Dorsolateral prefrontal cortex (tissue), 120 donors: ENCODE measurements at regions of chr16 and their contacts with region 1.

Region 1: GRCh38 chr16:75110637-75111513 is 5.7 kb downstream of the LDHD start:
- DNase-seq: peak; percentile 85 to 93 (median 90)
- H3K4me3 ChIP-seq: peak overlapping the region in 58 of 59 donors; percentile 7 to 69 (median 48)
- H3K27ac ChIP-seq: peak overlapping the region; percentile 60 to 95 (median 86)
- H3K27me3 ChIP-seq: no peaks in the 10 kb centered on the region
- CTCF ChIP-seq: peak; percentile 55 to 97 (median 91)

Region 2: GRCh38 chr16:74709441-74709877 is 401.4 kb before region 1 on chr16:
- intact Hi-C with region 1: loop called (anchors 5 to 10 kb)
- DNase-seq: peak; percentile 79 to 90 (median 86)
- H3K4me3 ChIP-seq: no peak overlapping the region
- H3K27ac ChIP-seq: peak overlapping the region; percentile 10 to 100 (median 87)
- H3K27me3 ChIP-seq: no peaks in the 10 kb centered on the region
- CTCF ChIP-seq: peak in 55 of 56 donors; percentile 95 to 100 (median 99)

Region 3: GRCh38 chr16:74862741-74863244 is 248.1 kb before region 1 on chr16:
- intact Hi-C with region 1: loop called in 1 of 2 experiments (anchors 10 kb)
- DNase-seq: peak in 1 of 10 donors; percentile 23
- H3K4me3 ChIP-seq: no peak overlapping the region
- H3K27ac ChIP-seq: peak overlapping the region in 24 of 59 donors; percentile 2 to 68 (median 36)
- H3K27me3 ChIP-seq: no peaks in the 10 kb centered on the region
- CTCF ChIP-seq: peak; percentile 47 to 97 (median 88)

Region 4: DNA sequence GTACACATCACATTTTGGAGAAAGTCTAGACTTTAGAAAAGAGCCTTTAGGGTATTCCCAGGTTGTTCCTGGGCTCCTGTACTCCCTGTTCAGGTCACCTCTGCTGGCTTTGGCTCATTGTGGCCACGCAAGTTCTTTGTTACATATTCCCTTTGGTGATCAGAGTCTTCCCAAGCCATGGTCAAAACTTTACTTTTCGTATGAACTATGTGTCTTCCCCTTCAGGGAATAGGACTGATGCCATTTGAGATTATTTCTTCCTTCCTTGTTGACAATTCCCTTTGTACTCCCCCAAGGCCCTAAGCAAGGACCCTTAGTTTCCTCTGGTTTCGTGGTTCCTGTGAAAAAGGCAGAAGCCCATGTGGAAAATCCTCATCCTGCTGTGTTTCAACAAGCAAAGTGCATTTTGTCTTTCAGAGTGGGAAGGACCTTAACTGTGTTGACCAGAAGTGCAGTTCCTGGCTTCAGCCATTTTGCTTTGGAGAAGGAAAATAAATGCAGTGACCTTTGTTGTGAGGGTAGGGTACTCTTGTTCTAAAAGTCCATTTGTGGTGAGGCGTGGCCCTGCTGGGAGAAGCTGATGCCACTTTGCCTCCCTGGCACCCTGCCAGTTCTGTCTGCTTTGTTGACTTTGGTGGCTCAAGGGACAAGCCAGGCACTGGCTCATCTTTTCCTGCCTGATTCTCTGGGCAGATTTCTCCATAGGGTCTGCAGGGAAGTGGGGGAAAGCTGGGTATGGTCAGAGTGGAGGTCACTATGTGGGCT is 56.9 kb before region 1 on chr16:
- intact Hi-C with region 1: loop called in 1 of 2 experiments (anchors 10 kb)
- DNase-seq: peak; percentile 51 to 81 (median 68)
- H3K4me3 ChIP-seq: no peak overlapping the region
- H3K27ac ChIP-seq: peak overlapping the region in 43 of 59 donors; percentile 4 to 76 (median 43)
- H3K27me3 ChIP-seq: no peaks in the 10 kb centered on the region
- CTCF ChIP-seq: no peak

Region 5: DNA sequence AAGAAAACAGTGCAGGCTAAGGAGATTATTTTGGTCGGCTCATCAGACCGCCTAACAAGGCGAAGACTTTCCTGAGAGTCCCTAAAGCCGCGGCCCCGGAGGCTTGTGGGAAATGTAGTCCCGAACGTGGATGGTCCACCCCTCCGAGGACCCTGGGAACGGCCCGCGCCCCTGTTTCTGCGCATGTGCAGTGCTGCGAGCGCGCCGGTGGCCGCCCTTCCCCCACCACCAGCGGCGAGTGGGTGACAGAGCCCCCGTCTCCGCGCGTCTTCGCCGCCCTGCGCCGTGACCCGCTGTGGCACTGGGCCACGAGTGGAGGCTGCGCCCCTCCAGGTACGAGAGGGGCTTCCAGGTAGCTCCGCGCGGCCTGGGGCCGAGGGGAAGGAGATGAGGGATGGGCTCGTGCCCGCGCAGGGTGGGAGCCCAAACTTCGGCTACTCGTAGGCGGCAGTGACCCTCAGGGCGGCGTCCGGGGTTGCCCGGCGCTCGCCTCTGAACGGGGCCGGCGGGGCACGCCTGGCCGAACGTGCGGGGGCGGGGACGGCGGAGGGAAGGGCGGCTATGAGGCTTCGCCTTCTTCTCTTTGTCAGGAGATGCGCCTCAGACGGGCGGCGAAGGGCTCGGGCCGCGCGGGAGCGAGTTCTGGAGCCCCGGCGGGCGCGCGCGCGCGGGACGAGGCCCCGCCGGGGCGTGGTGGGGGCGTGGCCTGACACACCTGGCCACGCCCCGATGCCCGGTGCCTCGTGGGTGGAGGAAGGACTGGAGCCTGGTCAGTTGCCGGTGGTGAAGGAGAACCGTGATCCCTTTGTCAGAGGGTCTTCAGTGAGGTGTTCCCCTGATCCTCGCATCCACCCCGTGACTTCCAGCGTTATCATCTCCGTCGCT is 37.7 kb after region 1 on chr16 and contains the start of gene ZFP1:
- intact Hi-C with region 1: loop called (anchors 2 to 5 kb)
- DNase-seq: peak; percentile 94 to 97 (median 96)
- H3K4me3 ChIP-seq: peak within 1 kb of the TSS; percentile 75 to 100 (median 97)
- H3K27ac ChIP-seq: peak within 1 kb of the TSS; percentile 86 to 100 (median 97)
- H3K27me3 ChIP-seq: no peaks in the 10 kb centered on the region
- CTCF ChIP-seq: peak in 33 of 56 donors; percentile 2 to 55 (median 21)
- total RNA-seq, gene ZFP1: 23.0 to 53.7 (median 36.8) TPM

Region 6: DNA sequence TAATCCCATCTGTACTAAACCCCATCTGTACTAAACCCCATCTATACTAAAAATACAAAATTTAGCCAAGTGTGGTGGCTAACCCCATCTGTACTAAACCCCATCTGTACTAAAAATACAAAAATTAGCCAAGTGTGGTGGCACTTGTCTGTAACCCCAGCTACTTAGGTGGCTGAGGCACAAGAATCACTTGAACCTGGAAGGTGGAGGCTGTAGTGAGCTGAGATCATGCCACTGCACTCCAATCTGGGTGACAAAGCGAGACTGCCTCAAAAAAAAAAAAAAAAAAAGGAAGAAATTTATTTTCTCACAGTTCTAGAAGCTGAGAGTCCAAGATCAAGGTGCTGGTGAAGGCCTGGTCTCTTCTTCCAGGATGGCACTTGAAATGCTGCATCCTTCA is 49.5 kb after region 1 on chr16:
- intact Hi-C with region 1: no loop called
- DNase-seq: no peak
- H3K4me3 ChIP-seq: no peak overlapping the region
- H3K27ac ChIP-seq: no peak overlapping the region
- H3K27me3 ChIP-seq: no peaks in the 10 kb centered on the region
- CTCF ChIP-seq: no peak